Activated CD4-positive, alpha-beta T cell treated with anti-CD3 and anti-CD28 coated beads, Interleukin-2, amount 10 ng/mL, durations not matched to agents 24 days and 14 days (primary cell): ENCODE measurements at regions of chr4 and their contacts with region 1.

Region 1: GRCh38 chr4:122577808-122578781 is 42.8 kb downstream of the IL21 start:
- DNase-seq: peak; percentile 92
- H3K4me3 Mint-ChIP-seq: peak overlapping the region; percentile 75
- H3K27ac Mint-ChIP-seq: peak overlapping the region; percentile 89
- H3K4me1 Mint-ChIP-seq: peaks cover 47% of the 10 kb centered on the region
- H3K27me3 Mint-ChIP-seq: no peaks in the 10 kb centered on the region

Region 2: GRCh38 chr4:121900132-121900983 is 677.7 kb before region 1 on chr4:
- intact Hi-C with region 1: loop called (anchors 1 kb)
- DNase-seq: peak; percentile 86
- H3K4me3 Mint-ChIP-seq: no peak overlapping the region
- H3K27ac Mint-ChIP-seq: no peak overlapping the region
- H3K4me1 Mint-ChIP-seq: peaks cover 4% of the 10 kb centered on the region
- H3K27me3 Mint-ChIP-seq: peaks cover 3% of the 10 kb centered on the region

Region 3: GRCh38 chr4:122151982-122152710 is 425.9 kb before region 1 on chr4 and contains the start of gene BLTP1:
- intact Hi-C with region 1: loop called (anchors 1 kb)
- DNase-seq: peak; percentile 97
- H3K4me3 Mint-ChIP-seq: peak within 1 kb of the TSS; percentile 92
- H3K27ac Mint-ChIP-seq: peak within 1 kb of the TSS; percentile 95
- H3K4me1 Mint-ChIP-seq: peaks cover 41% of the 10 kb centered on the region
- H3K27me3 Mint-ChIP-seq: no peaks in the 10 kb centered on the region
- total RNA-seq, gene BLTP1: 26.2 and 28.9 TPM in 2 replicates

Region 4: DNA sequence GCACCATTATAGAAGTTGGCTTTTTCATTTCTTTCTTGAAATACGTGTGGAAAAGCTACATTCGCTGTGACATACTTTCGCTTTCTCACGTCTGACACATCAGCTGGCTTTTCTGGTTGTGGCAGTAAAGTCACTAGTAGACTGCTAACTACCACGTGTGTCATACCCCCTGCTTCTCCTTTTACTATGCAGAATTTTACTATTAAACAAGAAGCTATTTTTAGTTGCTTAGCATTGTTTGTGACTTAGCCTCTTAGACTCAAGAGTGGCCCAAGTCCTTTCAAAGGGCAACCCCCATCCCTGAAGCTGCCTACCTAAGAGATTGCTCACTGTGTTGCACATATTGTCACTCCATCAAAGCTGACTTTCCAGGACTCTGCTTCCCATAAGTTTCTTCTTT is 119.5 kb before region 1 on chr4:
- intact Hi-C with region 1: loop called (anchors 1 kb)
- DNase-seq: peak; percentile 83
- H3K4me3 Mint-ChIP-seq: peak overlapping the region; percentile 81
- H3K27ac Mint-ChIP-seq: peak overlapping the region; percentile 88
- H3K4me1 Mint-ChIP-seq: peaks cover 35% of the 10 kb centered on the region
- H3K27me3 Mint-ChIP-seq: no peaks in the 10 kb centered on the region

Region 5: GRCh38 chr4:122542411-122543236 is 35.5 kb before region 1 on chr4:
- intact Hi-C with region 1: loop called (anchors 1 kb)
- DNase-seq: peak; percentile 69
- H3K4me3 Mint-ChIP-seq: peak overlapping the region; percentile 78
- H3K27ac Mint-ChIP-seq: peak overlapping the region; percentile 94
- H3K4me1 Mint-ChIP-seq: peaks cover 80% of the 10 kb centered on the region
- H3K27me3 Mint-ChIP-seq: no peaks in the 10 kb centered on the region

Region 6: GRCh38 chr4:122666527-122667245 is 88.6 kb after region 1 on chr4:
- intact Hi-C with region 1: loop called (anchors 1 kb)
- DNase-seq: no peak
- H3K4me3 Mint-ChIP-seq: peak overlapping the region; percentile 59
- H3K27ac Mint-ChIP-seq: peak overlapping the region; percentile 94
- H3K4me1 Mint-ChIP-seq: peaks cover 69% of the 10 kb centered on the region
- H3K27me3 Mint-ChIP-seq: no peaks in the 10 kb centered on the region

Region 7: GRCh38 chr4:122922877-122923511 is 344.9 kb after region 1 on chr4:
- intact Hi-C with region 1: loop called (anchors 2 kb)
- DNase-seq: peak; percentile 97
- H3K4me3 Mint-ChIP-seq: no peak overlapping the region
- H3K27ac Mint-ChIP-seq: peak overlapping the region; percentile 96
- H3K4me1 Mint-ChIP-seq: peaks cover 24% of the 10 kb centered on the region
- H3K27me3 Mint-ChIP-seq: no peaks in the 10 kb centered on the region